HEK293 (cell line): ENCODE measurements at regions of chr19 and their contacts with region 1.

Region 1: GRCh38 chr19:8494158-8494557 is 8.3 kb downstream of the PRAM1 start:
- H3K4me3 ChIP-seq: no peak overlapping the region
- H3K27ac ChIP-seq: 0 out of 2 replicates have a peak overlapping the region, but pooled peaks have one; percentile 16
- H3K4me1 ChIP-seq: no peaks in the 10 kb centered on the region
- CTCF ChIP-seq: no peak

Region 2: GRCh38 chr19:8352134-8352827 is 141.9 kb before region 1 on chr19:
- CTCF ChIA-PET with region 1: no interaction called
- POLR2A ChIA-PET with region 1: no interaction called
- H3K4me3 ChIP-seq: peak overlapping the region; percentile 10; the same call in 1 of the 2 replicates
- H3K27ac ChIP-seq: no peak overlapping the region
- H3K4me1 ChIP-seq: no peaks in the 10 kb centered on the region
- CTCF ChIP-seq: no peak

Region 3: GRCh38 chr19:8505680-8506401 is 11.7 kb after region 1 on chr19:
- CTCF ChIA-PET with region 1: interaction called, 14 read pairs
- POLR2A ChIA-PET with region 1: interaction called, 3 read pairs
- H3K4me3 ChIP-seq: peak overlapping the region; percentile 61
- H3K27ac ChIP-seq: peak overlapping the region; percentile 44; the same call in 1 of the 2 replicates
- H3K4me1 ChIP-seq: peaks cover 3% of the 10 kb centered on the region; the same call in 1 of the 2 replicates
- CTCF ChIP-seq: peak; percentile 91

Region 4: GRCh38 chr19:8536282-8536681 is 42.1 kb after region 1 on chr19:
- CTCF ChIA-PET with region 1: no interaction called
- POLR2A ChIA-PET with region 1: no interaction called
- H3K4me3 ChIP-seq: no peak overlapping the region
- H3K27ac ChIP-seq: no peak overlapping the region
- H3K4me1 ChIP-seq: no peaks in the 10 kb centered on the region
- CTCF ChIP-seq: no peak